Natural killer cell (primary cell): ENCODE measurements at regions of chr2 and their contacts with region 1.

Region 1: DNA sequence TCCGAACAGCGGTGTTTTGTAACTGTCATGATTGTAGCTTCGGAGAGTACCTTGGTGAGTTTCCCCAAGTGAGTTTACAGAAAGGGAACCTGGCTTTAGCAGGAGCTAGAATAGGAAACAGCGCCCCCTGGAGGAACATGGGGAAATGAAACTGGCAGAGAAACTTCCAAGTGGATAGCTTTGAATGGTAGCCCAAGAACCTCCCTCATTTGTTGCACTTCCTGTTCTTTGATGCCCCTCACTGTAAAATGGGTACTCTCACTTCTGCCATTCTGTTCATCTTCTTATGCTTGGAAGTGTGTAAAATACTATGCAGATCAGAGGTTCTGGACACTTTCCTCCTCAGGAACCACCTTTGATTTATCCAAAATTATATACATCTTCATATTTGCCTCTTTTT is 36.2 kb downstream of the CHST10 start:
- DNase-seq: peak; percentile 54 to 76
- ATAC-seq: peak; percentile 21 to 69 (median 67)
- H3K4me3 ChIP-seq: no peak overlapping the region
- H3K4me3 Mint-ChIP-seq: no peak overlapping the region
- H3K27ac ChIP-seq: no peak overlapping the region
- H3K27ac Mint-ChIP-seq: no peak overlapping the region
- H3K4me1 ChIP-seq: no peaks in the 10 kb centered on the region
- H3K4me1 Mint-ChIP-seq: no peaks in the 10 kb centered on the region
- H3K27me3 ChIP-seq: no peaks in the 10 kb centered on the region
- H3K27me3 Mint-ChIP-seq: peaks cover 3 to 6% of the 10 kb centered on the region in 2 donors
- CTCF ChIP-seq: peak; percentile 87

Region 2: DNA sequence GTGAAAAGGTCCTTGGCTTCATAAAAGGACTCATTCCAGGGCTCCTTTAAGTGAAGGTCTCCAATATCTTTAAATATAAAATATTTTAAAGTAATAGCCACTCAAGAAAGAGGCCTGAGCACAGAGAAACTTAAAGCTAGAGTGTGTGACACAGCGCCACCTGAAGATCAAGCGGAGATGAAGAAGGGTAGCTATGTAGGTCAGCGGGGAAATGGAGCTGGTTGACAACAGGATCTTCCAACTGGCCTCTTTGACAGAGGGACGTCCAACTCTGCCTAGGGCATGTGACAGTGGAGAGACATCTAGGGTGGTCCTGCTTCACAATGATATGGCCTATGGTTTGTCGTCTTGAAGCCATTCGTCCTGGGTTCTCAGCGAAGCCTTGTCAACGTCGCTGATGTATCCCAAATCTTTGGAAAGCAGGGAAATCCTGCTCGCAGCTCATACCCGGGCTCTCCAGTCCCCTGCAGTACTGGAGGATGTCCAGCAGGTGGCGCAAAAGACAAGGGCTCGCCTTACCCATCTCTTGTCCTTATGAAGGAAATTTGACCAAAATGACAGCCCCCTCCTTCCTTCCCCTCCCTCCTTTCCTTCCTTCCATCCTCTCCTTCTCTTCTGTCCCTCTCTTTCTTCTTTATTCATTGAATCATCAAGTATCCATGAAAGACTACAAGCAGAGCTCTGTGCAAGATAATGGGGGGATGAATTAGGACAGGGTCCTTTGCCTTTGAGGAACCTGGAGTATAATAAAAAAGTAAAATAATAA is 118.5 kb before region 1 on chr2:
- intact Hi-C with region 1: loop called (anchors 1 kb)
- DNase-seq: peak; percentile 48 to 66
- ATAC-seq: peak; percentile 65 to 92 (median 69)
- H3K4me3 ChIP-seq: no peak overlapping the region
- H3K4me3 Mint-ChIP-seq: no peak overlapping the region
- H3K27ac ChIP-seq: no peak overlapping the region
- H3K27ac Mint-ChIP-seq: no peak overlapping the region
- H3K4me1 ChIP-seq: no peaks in the 10 kb centered on the region
- H3K4me1 Mint-ChIP-seq: no peaks in the 10 kb centered on the region
- H3K27me3 ChIP-seq: no peaks in the 10 kb centered on the region
- H3K27me3 Mint-ChIP-seq: no peaks in the 10 kb centered on the region
- CTCF ChIP-seq: peak; percentile 98

Region 3: DNA sequence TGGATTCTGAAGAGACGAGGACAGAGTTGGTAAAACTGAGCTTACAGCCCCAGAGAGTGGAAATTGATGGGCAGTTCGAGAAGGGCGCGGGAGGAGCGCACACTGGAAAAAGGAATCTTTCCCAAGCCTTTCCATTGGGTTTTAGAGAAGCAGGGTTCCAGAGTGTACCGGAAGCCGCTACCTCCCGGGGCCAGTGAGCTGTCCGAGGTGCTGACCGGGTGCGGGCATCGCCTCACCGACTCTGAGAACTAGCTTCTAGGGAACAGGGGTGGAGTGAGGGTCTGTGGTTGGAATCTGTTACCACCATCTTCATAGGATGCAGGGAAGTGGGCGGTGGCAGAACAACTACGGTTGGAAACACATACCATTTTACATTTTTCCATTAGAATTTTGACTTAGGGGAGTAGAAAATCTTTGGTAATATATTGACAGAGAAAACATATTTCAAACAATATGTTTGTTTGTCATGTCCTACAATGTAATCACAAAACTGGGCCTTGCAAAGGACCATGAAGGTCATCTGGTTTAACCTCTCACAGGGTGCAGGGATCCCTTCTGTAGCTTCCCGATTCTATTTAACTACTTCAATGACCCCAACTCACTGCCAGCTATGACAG is 89.8 kb after region 1 on chr2:
- intact Hi-C with region 1: no loop called
- DNase-seq: no peak
- ATAC-seq: no peak
- H3K4me3 ChIP-seq: no peak overlapping the region
- H3K4me3 Mint-ChIP-seq: no peak overlapping the region
- H3K27ac ChIP-seq: no peak overlapping the region
- H3K27ac Mint-ChIP-seq: no peak overlapping the region
- H3K4me1 ChIP-seq: no peaks in the 10 kb centered on the region
- H3K4me1 Mint-ChIP-seq: no peaks in the 10 kb centered on the region
- H3K27me3 ChIP-seq: no peaks in the 10 kb centered on the region
- H3K27me3 Mint-ChIP-seq: peaks cover 36 to 45% of the 10 kb centered on the region in 2 donors
- CTCF ChIP-seq: no peak

Region 4: DNA sequence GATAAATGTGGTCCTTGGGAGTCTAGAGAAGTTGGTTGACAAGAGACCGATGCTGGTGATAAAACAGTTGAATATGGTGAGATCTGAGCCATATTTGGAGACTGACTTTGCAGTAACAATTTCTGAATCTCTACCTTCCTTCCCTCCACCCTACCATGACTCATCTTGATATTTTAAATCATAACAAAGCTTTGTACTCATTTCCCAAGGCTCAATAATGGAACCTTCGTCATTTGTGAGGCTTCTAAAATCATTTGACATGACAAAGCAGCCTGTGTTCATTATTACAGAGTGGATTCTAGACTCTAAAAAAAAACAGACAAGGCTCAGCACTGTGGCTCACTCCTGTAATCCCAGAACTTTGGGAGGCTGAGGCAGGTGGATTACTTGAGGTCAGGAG is 143.1 kb after region 1 on chr2:
- intact Hi-C with region 1: no loop called
- DNase-seq: no peak
- ATAC-seq: no peak
- H3K4me3 ChIP-seq: no peak overlapping the region
- H3K4me3 Mint-ChIP-seq: no peak overlapping the region
- H3K27ac ChIP-seq: no peak overlapping the region
- H3K27ac Mint-ChIP-seq: no peak overlapping the region
- H3K4me1 ChIP-seq: no peaks in the 10 kb centered on the region
- H3K4me1 Mint-ChIP-seq: no peaks in the 10 kb centered on the region
- H3K27me3 ChIP-seq: no peaks in the 10 kb centered on the region
- H3K27me3 Mint-ChIP-seq: no peaks in the 10 kb centered on the region
- CTCF ChIP-seq: no peak